Naive thymus-derived CD4-positive, alpha-beta T cell (primary cell): ENCODE measurements at regions of chr4 and their contacts with region 1.

Region 1: DNA sequence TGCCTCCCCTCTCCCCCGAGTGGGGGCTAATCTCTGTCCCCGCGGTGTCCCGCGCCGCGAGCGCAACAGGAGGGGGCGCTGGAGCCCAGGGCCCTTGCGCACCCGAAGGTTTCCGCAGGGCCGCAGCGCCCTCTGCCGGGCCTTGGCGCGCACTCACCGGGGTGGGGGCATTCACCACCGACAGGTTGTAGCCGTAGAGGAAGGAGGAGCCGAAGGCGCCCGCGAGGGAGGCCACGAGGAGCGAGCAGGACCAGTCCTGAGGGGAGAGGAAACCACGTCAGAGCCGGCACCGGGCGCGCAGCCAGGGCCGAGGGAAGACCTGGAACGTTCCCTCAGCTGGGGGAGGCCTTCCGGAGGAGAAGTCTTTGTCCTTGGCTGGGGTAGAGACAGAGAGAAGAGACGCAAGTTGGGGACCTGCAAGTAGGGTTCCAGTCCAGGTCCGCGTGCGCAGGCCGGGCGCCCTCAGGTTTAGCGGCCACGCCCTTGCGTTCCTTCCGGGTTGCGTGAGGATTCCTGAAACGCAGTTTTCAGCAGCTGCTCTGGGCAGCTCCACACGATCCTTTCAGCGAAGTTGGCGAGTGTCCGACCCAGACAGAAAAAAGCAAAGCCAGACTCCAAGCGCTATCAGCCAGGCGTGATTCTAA is 2.4 kb downstream of the SLC2A9 start:
- DNase-seq: peak; percentile 92 to 96 (median 95)
- ATAC-seq: peak; percentile 99
- H3K4me3 ChIP-seq: peak overlapping the region; percentile 75
- H3K4me3 Mint-ChIP-seq: peak overlapping the region; percentile 83 to 96 (median 90)
- H3K27ac ChIP-seq: peak overlapping the region; percentile 81
- H3K27ac Mint-ChIP-seq: peak overlapping the region; percentile 82 to 98 (median 97)
- H3K4me1 ChIP-seq: peaks cover 6 to 10% of the 10 kb centered on the region in 2 donors
- H3K4me1 Mint-ChIP-seq: peaks cover 8 to 25% (median 13%) of the 10 kb centered on the region in 7 donors
- H3K27me3 ChIP-seq: no peaks in the 10 kb centered on the region
- H3K27me3 Mint-ChIP-seq: peaks cover 0 to under 1% (median 0%) of the 10 kb centered on the region in 5 donors

Region 2: GRCh38 chr4:9704551-9705332 is 314.2 kb before region 1 on chr4:
- CTCF ChIA-PET with region 1: interaction called, 3 read pairs
- POLR2A ChIA-PET with region 1: no interaction called
- intact Hi-C with region 1: loop called (anchors 1 kb)
- DNase-seq: no peak
- ATAC-seq: no peak
- H3K4me3 ChIP-seq: no peak overlapping the region
- H3K4me3 Mint-ChIP-seq: peak overlapping the region in 1 of 10 donors; percentile 30
- H3K27ac ChIP-seq: no peak overlapping the region
- H3K27ac Mint-ChIP-seq: no peak overlapping the region
- H3K4me1 ChIP-seq: no peaks in the 10 kb centered on the region
- H3K4me1 Mint-ChIP-seq: peaks cover 9 to 21% (median 11%) of the 10 kb centered on the region in 7 donors
- H3K27me3 ChIP-seq: no peaks in the 10 kb centered on the region
- H3K27me3 Mint-ChIP-seq: peaks cover 0 to 3% (median 0%) of the 10 kb centered on the region in 5 donors

Region 3: DNA sequence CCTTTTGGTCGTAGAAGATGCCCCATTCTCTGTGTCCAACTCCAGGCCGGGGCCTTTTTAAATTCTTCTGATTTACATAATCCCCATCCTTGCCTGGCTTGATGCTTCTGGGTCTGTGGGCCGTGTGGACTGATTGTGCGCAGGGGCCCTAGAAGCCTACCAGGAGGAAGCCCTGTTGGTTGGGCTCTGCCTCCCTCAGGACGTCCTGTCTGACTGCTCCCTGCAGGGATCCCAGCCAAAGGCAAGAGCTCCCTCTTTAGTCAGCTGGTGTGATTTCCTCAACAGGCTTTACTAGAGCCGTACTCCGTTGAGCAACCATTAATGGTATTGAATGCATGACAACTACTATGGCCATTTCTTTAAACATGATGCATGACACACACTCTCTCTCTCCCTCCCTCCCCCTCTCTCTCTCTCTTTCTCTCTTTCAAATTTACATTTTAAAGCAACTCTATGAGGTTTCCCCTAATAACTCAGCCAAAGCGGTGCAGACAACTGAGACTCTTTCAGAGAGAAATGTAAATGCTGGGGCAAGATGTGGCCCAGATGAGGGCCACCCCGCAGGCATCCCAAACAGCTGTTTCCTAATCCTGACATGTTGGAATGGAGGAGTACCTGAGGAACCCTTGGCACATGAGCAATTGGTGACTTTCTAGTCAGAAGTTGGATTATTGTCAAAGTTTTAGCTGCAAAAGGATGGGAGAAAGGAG is 120.2 kb before region 1 on chr4:
- CTCF ChIA-PET with region 1: no interaction called
- POLR2A ChIA-PET with region 1: no interaction called
- intact Hi-C with region 1: loop called in 1 of 2 experiments (anchors 10 kb)
- DNase-seq: no peak
- ATAC-seq: no peak
- H3K4me3 ChIP-seq: no peak overlapping the region
- H3K4me3 Mint-ChIP-seq: no peak overlapping the region
- H3K27ac ChIP-seq: no peak overlapping the region
- H3K27ac Mint-ChIP-seq: no peak overlapping the region
- H3K4me1 ChIP-seq: no peaks in the 10 kb centered on the region
- H3K4me1 Mint-ChIP-seq: no peaks in the 10 kb centered on the region
- H3K27me3 ChIP-seq: no peaks in the 10 kb centered on the region
- H3K27me3 Mint-ChIP-seq: peaks cover 0 to 22% (median 6%) of the 10 kb centered on the region in 5 donors

Region 4: GRCh38 chr4:10096201-10096977 is 77.4 kb after region 1 on chr4:
- CTCF ChIA-PET with region 1: no interaction called
- POLR2A ChIA-PET with region 1: interaction called, 3 read pairs
- intact Hi-C with region 1: loop called (anchors 2 to 5 kb)
- DNase-seq: peak; percentile 39 to 76 (median 69)
- ATAC-seq: peak; percentile 81
- H3K4me3 ChIP-seq: peak overlapping the region; percentile 21
- H3K4me3 Mint-ChIP-seq: peak overlapping the region in 9 of 10 donors; percentile 16 to 79 (median 55)
- H3K27ac ChIP-seq: peak overlapping the region; percentile 67
- H3K27ac Mint-ChIP-seq: peak overlapping the region; percentile 82 to 95 (median 90)
- H3K4me1 ChIP-seq: peaks cover 75 to 82% of the 10 kb centered on the region in 2 donors
- H3K4me1 Mint-ChIP-seq: peaks cover 66 to 100% (median 94%) of the 10 kb centered on the region in 7 donors
- H3K27me3 ChIP-seq: no peaks in the 10 kb centered on the region
- H3K27me3 Mint-ChIP-seq: no peaks in the 10 kb centered on the region

Region 5: GRCh38 chr4:10164877-10165283 is 145.9 kb after region 1 on chr4:
- CTCF ChIA-PET with region 1: no interaction called
- POLR2A ChIA-PET with region 1: no interaction called
- intact Hi-C with region 1: loop called in 1 of 2 experiments (anchors 1 kb)
- DNase-seq: no peak
- ATAC-seq: no peak
- H3K4me3 ChIP-seq: no peak overlapping the region
- H3K4me3 Mint-ChIP-seq: no peak overlapping the region
- H3K27ac ChIP-seq: no peak overlapping the region
- H3K27ac Mint-ChIP-seq: peak overlapping the region in 1 of 9 donors; percentile 62
- H3K4me1 ChIP-seq: peaks cover 8 to 30% of the 10 kb centered on the region in 2 donors
- H3K4me1 Mint-ChIP-seq: peaks cover 14 to 41% (median 32%) of the 10 kb centered on the region in 7 donors
- H3K27me3 ChIP-seq: no peaks in the 10 kb centered on the region
- H3K27me3 Mint-ChIP-seq: no peaks in the 10 kb centered on the region

Region 6: GRCh38 chr4:10461091-10461849 is 442.3 kb after region 1 on chr4:
- CTCF ChIA-PET with region 1: no interaction called
- POLR2A ChIA-PET with region 1: no interaction called
- intact Hi-C with region 1: loop called (anchors 1 kb)
- DNase-seq: peak; percentile 52 to 90 (median 80)
- ATAC-seq: peak; percentile 89
- H3K4me3 ChIP-seq: peak overlapping the region; percentile 61
- H3K4me3 Mint-ChIP-seq: peak overlapping the region; percentile 77 to 92 (median 86)
- H3K27ac ChIP-seq: no peak overlapping the region
- H3K27ac Mint-ChIP-seq: peak overlapping the region in 4 of 9 donors; percentile 3 to 85 (median 45)
- H3K4me1 ChIP-seq: peaks cover 4 to 6% of the 10 kb centered on the region in 2 donors
- H3K4me1 Mint-ChIP-seq: peaks cover 14 to 38% (median 30%) of the 10 kb centered on the region in 7 donors
- H3K27me3 ChIP-seq: no peaks in the 10 kb centered on the region
- H3K27me3 Mint-ChIP-seq: peaks cover 21 to 43% (median 34%) of the 10 kb centered on the region in 5 donors

Region 7: GRCh38 chr4:11471618-11472017 is 1452.7 kb after region 1 on chr4:
- CTCF ChIA-PET with region 1: no interaction called
- POLR2A ChIA-PET with region 1: no interaction called
- intact Hi-C with region 1: loop called in 1 of 2 experiments (anchors 2 kb)
- DNase-seq: peak; percentile 12 to 82 (median 75)
- ATAC-seq: peak; percentile 96
- H3K4me3 ChIP-seq: peak overlapping the region; percentile 66
- H3K4me3 Mint-ChIP-seq: peak overlapping the region; percentile 71 to 95 (median 90)
- H3K27ac ChIP-seq: peak overlapping the region; percentile 67
- H3K27ac Mint-ChIP-seq: peak overlapping the region; percentile 94 to 99 (median 96)
- H3K4me1 ChIP-seq: peaks cover 14 to 25% of the 10 kb centered on the region in 2 donors
- H3K4me1 Mint-ChIP-seq: peaks cover 28 to 61% (median 45%) of the 10 kb centered on the region in 7 donors
- H3K27me3 ChIP-seq: no peaks in the 10 kb centered on the region
- H3K27me3 Mint-ChIP-seq: peaks cover 0 to under 1% (median 0%) of the 10 kb centered on the region in 5 donors